PC-9 (cell line): ENCODE measurements at regions of chr19 and their contacts with region 1.

Region 1: DNA sequence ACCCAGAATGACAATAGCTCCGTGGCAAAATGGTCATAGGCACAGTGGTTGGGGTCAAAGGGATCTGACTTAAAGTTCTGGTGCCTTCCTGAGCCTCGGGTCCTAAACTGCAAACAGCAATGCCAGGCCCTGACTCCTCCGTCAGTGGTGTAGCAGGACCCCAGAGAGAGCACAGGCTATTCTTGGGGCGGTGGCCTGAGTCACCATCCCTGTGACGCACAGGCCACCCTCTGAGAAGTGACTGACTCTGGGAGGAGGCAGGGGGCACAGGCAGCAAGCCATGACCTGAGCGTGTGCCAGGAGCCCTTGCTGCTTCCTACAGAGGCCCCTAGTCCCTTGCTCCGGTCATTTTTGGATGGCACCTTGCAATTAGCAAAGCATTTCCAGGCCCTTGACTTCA is 18.7 kb downstream of the PLVAP start:
- DNase-seq: peak in 1 of 2 experiments; percentile 15
- H3K4me3 ChIP-seq: no peak overlapping the region
- H3K27ac ChIP-seq: no peak overlapping the region
- H3K4me1 ChIP-seq: no peaks in the 10 kb centered on the region
- H3K27me3 ChIP-seq: no peaks in the 10 kb centered on the region
- CTCF ChIP-seq: no peak

Region 2: GRCh38 chr19:17073869-17074633 is 284.3 kb before region 1 on chr19:
- CTCF ChIA-PET with region 1: no interaction called
- POLR2A ChIA-PET with region 1: no interaction called
- intact Hi-C with region 1: no loop called
- DNase-seq: no peak
- H3K4me3 ChIP-seq: peak overlapping the region; percentile 65
- H3K27ac ChIP-seq: peak overlapping the region; percentile 47
- H3K4me1 ChIP-seq: peaks cover 37% of the 10 kb centered on the region
- H3K27me3 ChIP-seq: no peaks in the 10 kb centered on the region
- CTCF ChIP-seq: no peak

Region 3: GRCh38 chr19:17370026-17370587 is 11.7 kb after region 1 on chr19:
- CTCF ChIA-PET with region 1: interaction called, 4 read pairs
- POLR2A ChIA-PET with region 1: interaction called, 14 read pairs
- intact Hi-C with region 1: no loop called
- DNase-seq: no peak
- H3K4me3 ChIP-seq: no peak overlapping the region
- H3K27ac ChIP-seq: no peak overlapping the region
- H3K4me1 ChIP-seq: no peaks in the 10 kb centered on the region
- H3K27me3 ChIP-seq: 0 out of 2 replicates have a peak, but pooled peaks cover 4% of the 10 kb centered on the region
- CTCF ChIP-seq: no peak

Region 4: DNA sequence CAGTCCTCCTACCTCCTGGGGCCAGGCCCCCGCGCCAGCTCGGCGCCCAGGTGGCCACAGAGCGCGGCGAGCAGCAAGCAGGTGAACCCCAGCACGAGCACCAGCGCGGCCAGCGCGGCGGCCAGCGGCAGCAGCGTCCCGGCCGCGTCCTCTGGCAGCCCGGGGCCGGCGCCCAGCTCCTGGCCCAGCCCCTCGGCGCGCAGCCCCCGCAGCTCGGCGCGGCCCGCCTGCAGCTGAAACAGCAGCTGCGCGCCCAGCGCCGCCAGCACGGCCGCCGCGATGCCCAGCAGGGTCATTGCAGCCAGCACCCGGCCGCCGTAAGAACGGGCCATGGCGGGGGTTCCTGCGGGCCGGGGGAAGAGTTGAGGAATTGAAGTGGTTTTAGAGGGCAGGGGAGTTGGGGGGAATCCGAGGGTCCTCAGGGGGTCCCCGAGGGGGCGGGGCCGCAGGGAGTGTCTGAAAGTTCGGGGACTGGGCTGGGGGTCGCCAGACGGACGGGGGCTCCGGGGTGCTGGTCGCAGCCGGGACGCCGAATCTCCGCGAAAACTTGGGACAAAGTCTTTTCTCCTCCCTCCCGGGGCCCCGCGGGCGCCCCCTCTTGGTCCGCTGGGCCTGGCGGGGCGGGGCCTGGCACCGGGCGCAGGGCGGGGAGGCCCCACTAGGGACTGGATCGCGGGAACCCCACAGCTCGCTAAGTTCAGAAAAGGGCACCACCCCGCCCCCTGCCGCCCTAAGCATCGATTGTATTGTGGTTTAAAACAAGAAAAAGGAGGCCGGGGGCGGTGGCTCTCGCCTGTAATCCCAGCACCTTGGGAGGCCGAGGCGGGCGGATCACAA is 90.0 kb after region 1 on chr19 and contains the start of gene TMEM221:
- CTCF ChIA-PET with region 1: interaction called, 12 read pairs
- POLR2A ChIA-PET with region 1: no interaction called
- intact Hi-C with region 1: no loop called
- DNase-seq: peak in 1 of 2 experiments; percentile 51
- H3K4me3 ChIP-seq: peak within 1 kb of the TSS; percentile 76
- H3K27ac ChIP-seq: no peak within 1 kb of the TSS
- H3K4me1 ChIP-seq: peaks cover 14% of the 10 kb centered on the region
- H3K27me3 ChIP-seq: no peaks in the 10 kb centered on the region
- CTCF ChIP-seq: peak; percentile 71
- total RNA-seq, gene TMEM221: 2.0 and 3.9 TPM in 2 replicates